ENCODE measurements at regions of chr10 and their contacts with region 1.

Region 1: GRCh38 chr10:33134011-33134751 is 176.2 kb upstream of the ITGB1 start:
- DNase-seq: peak; percentile 89
- ATAC-seq: peak; percentile 77
- H3K4me3 Mint-ChIP-seq: peak overlapping the region; percentile 25
- H3K27ac Mint-ChIP-seq: peak overlapping the region; percentile 83
- H3K4me1 Mint-ChIP-seq: peaks cover 83% of the 10 kb centered on the region
- H3K27me3 Mint-ChIP-seq: no peaks in the 10 kb centered on the region

Region 2: DNA sequence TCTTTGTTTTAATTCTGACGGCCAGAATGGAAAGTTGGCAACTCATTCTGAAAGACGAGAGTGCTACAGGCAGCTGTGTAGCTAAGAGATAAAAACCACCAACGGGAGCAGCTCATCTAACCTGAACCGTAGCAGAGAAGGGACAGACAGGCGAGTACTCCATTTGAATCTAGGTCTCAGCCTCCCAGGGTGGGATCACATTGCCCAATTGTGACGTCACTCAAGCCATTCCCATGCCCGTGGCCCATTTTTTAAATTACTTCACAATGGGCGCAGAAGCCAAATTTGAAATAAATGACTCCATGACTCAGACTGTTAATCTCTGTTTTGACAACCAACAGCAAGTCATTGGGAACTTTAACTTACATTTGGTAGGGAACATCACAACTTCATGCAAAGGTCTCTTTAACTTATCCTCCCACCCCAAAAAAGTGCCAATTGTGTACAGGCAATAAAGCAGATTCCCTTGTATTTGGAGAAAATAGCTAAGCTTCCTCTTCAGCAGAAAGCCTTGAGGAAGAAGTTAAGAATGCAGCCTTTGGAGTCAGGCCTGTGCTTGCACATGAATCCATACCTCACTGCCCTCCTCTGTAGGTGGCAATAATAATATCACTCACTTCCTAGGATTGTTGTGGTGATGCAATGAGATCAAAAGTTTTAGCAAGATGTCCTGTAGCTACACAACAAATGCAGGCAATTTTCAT is 984.8 kb before region 1 on chr10:
- CTCF ChIA-PET with region 1: no interaction called
- POLR2A ChIA-PET with region 1: no interaction called
- intact Hi-C with region 1: loop called in 1 of 2 experiments (anchors 5 kb)
- DNase-seq: peak; percentile 62
- ATAC-seq: peak; percentile 87
- H3K4me3 Mint-ChIP-seq: no peak overlapping the region
- H3K27ac Mint-ChIP-seq: peak overlapping the region; percentile 75
- H3K4me1 Mint-ChIP-seq: peaks cover 32% of the 10 kb centered on the region
- H3K27me3 Mint-ChIP-seq: no peaks in the 10 kb centered on the region

Region 3: DNA sequence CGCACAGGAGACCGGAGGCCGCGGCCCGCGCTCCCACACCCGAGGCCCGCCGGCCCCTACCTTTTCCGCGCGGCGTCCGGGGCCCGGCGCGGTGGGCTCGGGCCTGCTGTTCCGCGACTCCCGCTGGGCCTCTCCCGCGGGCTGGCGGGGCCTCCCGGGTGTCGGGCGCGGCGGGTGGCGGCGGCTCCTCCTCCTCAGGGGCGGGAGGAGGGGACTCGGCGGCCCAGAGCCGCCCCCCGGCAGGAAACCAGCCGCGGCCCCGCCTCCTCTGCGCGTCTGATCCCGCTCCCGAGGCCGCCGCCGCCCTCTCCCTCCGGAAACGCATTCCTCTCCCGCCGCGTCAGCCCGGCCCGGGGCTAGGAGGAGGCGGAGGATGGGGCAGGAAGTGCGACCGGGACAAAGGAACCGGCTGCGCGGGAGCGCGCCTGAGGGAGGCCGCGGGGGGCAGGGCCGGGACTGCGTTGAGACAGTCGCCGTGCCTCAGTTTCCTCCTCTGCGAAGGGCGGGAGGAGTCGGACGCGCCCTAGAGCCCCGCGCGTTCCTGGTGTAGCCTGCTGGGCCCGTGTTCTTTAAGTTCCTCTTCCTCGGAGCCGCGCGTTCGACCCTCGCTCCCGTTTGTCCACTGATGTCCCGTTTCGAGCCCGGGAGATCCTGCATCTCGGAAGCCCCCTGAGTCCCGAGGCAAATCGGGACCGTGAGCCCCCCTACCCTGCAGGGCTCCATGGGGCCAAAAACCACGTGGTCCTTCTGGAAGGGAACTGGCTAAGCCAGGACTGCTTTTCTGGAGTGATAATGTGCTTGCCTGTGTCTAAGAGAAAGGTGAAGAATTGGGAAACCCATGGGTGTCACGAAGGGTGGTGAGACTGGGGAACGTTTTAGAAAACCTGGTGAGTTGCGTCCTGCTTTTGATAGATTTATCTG is 175.8 kb before region 1 on chr10 and contains the start of gene ITGB1:
- CTCF ChIA-PET with region 1: no interaction called
- POLR2A ChIA-PET with region 1: interaction called, 6 read pairs
- intact Hi-C with region 1: loop called in 1 of 2 experiments (anchors 2 kb)
- DNase-seq: peak; percentile 92
- ATAC-seq: peak; percentile 83
- H3K4me3 Mint-ChIP-seq: peak within 1 kb of the TSS; percentile 83
- H3K27ac Mint-ChIP-seq: peak within 1 kb of the TSS; percentile 96
- H3K4me1 Mint-ChIP-seq: peaks cover 43% of the 10 kb centered on the region
- H3K27me3 Mint-ChIP-seq: peaks cover 10% of the 10 kb centered on the region
- total RNA-seq, gene ITGB1: 57.6 to 68.9 TPM

Region 4: DNA sequence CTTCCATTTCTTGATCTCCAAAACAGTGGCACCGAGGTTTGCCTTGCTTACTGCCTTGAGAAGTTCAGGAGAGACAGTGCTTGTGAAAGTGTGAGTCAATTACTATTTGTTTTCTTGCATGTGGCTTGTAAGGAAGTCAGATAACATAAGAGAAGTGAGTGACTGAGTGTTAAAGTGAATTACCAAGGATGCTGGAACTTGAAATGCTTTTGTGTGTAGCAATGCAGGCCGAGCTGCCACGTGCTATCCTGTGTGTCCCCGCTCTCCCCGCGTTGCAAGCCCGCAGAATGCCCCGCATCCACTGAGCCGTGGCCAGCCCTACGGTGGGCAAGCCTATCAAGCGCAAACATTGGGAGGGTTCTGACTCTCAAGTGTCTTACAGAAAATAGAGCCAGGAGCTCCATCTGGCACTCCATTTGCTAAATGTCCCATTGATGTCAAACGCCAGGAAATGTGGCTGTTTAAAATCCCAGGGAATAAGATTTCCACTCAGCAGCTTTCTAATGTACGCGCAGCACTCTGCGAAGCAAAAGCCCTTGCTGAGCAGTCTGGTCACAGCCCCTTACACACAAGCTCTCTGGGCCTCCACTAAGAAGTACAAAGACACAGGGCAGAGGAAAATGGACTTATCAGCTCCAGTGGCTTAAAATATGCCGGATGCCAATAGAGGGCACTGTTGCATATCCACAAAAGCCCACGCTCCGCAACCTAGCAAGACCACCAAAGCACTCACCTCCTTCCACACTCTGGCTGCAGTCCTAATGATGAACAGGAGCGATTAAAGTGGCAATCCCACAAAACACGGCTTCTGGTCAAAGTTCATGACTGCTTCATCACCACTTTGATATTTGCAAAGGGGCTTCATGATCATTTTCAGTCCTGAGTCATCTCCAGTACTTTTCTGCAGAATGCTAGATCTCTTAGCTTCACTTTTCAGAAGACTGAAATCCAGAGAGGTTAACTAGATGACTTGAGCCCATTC is 18.2 kb before region 1 on chr10:
- CTCF ChIA-PET with region 1: interaction called, 16 read pairs
- POLR2A ChIA-PET with region 1: interaction called, 10 read pairs
- intact Hi-C with region 1: loop called (anchors 1 kb)
- DNase-seq: no peak
- ATAC-seq: peak; percentile 30
- H3K4me3 Mint-ChIP-seq: no peak overlapping the region
- H3K27ac Mint-ChIP-seq: peak overlapping the region; percentile 62
- H3K4me1 Mint-ChIP-seq: peaks cover 86% of the 10 kb centered on the region
- H3K27me3 Mint-ChIP-seq: no peaks in the 10 kb centered on the region

Region 5: DNA sequence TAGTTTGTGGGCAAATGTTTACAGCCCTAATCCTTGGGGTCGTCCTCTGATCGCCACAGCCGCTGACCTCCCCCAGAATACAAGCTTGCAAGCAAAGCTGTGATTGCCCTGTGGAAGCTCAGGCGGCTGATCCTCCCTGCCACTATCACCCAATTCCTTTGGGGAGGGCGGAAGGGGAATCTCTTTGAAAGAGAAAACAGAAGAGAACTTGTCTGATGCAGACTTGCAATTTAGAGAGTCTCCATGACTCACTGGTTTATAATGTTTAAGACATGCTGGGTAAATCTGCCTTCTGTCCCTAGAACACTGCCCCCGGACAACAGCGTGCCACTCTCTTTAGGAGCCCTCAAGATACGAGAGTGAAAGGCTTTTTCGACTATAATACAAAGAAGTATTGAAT is 124.8 kb after region 1 on chr10:
- CTCF ChIA-PET with region 1: no interaction called
- POLR2A ChIA-PET with region 1: no interaction called
- intact Hi-C with region 1: loop called (anchors 1 to 5 kb)
- DNase-seq: no peak
- ATAC-seq: no peak
- H3K4me3 Mint-ChIP-seq: no peak overlapping the region
- H3K27ac Mint-ChIP-seq: no peak overlapping the region
- H3K4me1 Mint-ChIP-seq: peaks cover 6% of the 10 kb centered on the region
- H3K27me3 Mint-ChIP-seq: peaks cover 49% of the 10 kb centered on the region

Region 6: DNA sequence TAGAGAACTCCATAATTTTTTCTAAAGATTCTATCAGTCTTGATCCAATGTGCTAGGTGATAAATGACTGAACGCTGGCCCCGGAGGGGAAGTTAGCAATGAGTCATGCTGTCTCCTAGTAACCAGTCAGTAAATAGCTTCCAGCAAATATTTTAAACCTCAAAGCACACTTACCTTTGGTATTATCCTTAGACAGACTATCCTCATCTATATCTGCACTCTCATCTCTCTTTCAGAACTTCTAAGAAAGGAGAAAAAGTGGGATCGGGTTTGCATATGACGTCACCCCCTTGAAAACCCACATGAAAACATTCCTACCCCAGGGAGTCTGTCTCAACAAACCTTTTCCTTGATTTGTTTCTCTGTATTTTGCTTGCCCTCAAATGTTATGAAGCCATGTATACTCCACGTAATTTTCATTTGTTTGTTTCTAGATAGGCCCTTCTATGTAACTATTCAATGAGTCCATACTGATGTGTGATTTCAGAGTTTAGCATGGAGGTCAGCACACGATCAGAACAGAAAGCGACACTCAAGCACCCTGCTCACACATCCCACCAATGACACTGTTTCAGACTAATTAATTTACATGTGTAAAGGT is 375.1 kb after region 1 on chr10:
- CTCF ChIA-PET with region 1: no interaction called
- POLR2A ChIA-PET with region 1: no interaction called
- intact Hi-C with region 1: loop called in 1 of 2 experiments (anchors 2 kb)
- DNase-seq: peak; percentile 64
- ATAC-seq: peak; percentile 85
- H3K4me3 Mint-ChIP-seq: no peak overlapping the region
- H3K27ac Mint-ChIP-seq: peak overlapping the region; percentile 32
- H3K4me1 Mint-ChIP-seq: peaks cover 8% of the 10 kb centered on the region
- H3K27me3 Mint-ChIP-seq: peaks cover 20% of the 10 kb centered on the region

Measured in activated CD4-positive, alpha-beta T cell treated with anti-CD3 and anti-CD28 coated beads for 36 hours (primary cell).